ENCODE measurements at regions of chr14 and their contacts with region 1.

Region 1: GRCh38 chr14:53295985-53296582 is 143.0 kb upstream of the DDHD1 start:
- DNase-seq: peak in 1 of 3 donors; percentile 47
- ATAC-seq: no peak
- H3K4me3 ChIP-seq: no peak overlapping the region
- H3K4me1 ChIP-seq: no peaks in the 10 kb centered on the region
- CTCF ChIP-seq: peak; percentile 44

Region 2: GRCh38 chr14:53539489-53540126 is 243.5 kb after region 1 on chr14:
- intact Hi-C with region 1: no loop called
- DNase-seq: peak; percentile 59 to 87 (median 80)
- ATAC-seq: peak; percentile 83
- H3K4me3 ChIP-seq: no peak overlapping the region
- H3K4me1 ChIP-seq: no peaks in the 10 kb centered on the region
- CTCF ChIP-seq: peak; percentile 40

Region 3: GRCh38 chr14:54347997-54348611 is 1052.0 kb after region 1 on chr14:
- intact Hi-C with region 1: loop called in 1 of 2 experiments (anchors 10 kb)
- DNase-seq: peak in 1 of 3 donors; percentile 61
- ATAC-seq: peak; percentile 90
- H3K4me3 ChIP-seq: no peak overlapping the region
- H3K4me1 ChIP-seq: peaks cover 8% of the 10 kb centered on the region
- CTCF ChIP-seq: peak; percentile 35

Measured in mucosa of descending colon (tissue), 3 donors.